ENCODE measurements at regions of chr11 and their contacts with region 1.

Region 1: GRCh38 chr11:60615497-60615896 is 83.9 kb upstream of the MS4A8 start:
- DNase-seq: no peak
- H3K4me3 ChIP-seq: no peak overlapping the region
- H3K27ac ChIP-seq: no peak overlapping the region
- H3K4me1 ChIP-seq: no peaks in the 10 kb centered on the region
- H3K27me3 ChIP-seq: peaks cover 15% of the 10 kb centered on the region; the same call in 1 of the 2 replicates
- CTCF ChIP-seq: no peak

Region 2: DNA sequence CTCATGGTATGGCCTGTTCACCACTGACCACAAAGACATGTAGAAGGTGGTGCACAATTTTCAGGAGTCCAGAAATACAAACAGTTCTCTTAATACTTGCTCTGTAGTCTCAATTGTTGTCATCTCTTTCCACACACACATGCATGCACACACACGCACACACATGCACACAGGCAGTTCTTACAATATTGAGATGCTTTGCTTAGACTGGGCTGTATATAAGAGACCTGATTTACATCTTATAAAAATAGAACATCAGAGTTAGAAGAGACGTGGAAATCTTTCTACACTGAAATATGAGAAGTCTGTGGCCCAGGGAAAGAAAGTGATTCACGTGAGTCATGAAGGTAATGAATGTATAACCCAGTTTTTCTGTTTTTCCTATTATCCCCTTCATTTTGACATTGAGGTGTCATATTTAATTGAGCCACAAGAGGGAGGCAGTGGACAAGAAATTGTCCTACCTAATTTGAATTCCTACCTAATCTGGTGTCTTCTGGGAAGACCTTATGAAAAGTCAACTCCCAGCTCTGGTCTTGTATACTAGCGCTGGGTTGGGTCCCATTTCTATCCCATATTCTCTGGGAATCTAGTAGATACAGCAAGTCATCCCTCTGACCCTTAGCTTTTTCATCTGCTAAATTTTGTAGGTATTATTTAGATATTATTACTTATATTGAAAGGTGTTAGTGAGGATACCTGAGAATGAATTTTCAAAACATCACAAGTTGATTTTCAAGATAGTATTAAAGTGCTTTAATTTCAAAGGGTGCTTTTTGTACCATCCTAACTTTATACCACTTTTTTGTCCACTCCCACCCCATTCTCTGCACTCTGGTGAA is 349.9 kb before region 1 on chr11:
- CTCF ChIA-PET with region 1: no interaction called
- POLR2A ChIA-PET with region 1: no interaction called
- intact Hi-C with region 1: loop called (anchors 5 kb)
- DNase-seq: peak in 1 of 2 experiments; percentile 22
- H3K4me3 ChIP-seq: no peak overlapping the region
- H3K27ac ChIP-seq: no peak overlapping the region
- H3K4me1 ChIP-seq: no peaks in the 10 kb centered on the region
- H3K27me3 ChIP-seq: peaks cover 23% of the 10 kb centered on the region; the same call in 1 of the 2 replicates
- CTCF ChIP-seq: peak; percentile 91

Region 3: GRCh38 chr11:60363542-60364510 is 251.7 kb before region 1 on chr11:
- CTCF ChIA-PET with region 1: no interaction called
- POLR2A ChIA-PET with region 1: no interaction called
- intact Hi-C with region 1: loop called (anchors 2 kb)
- DNase-seq: peak in 1 of 2 experiments; percentile 39
- H3K4me3 ChIP-seq: no peak overlapping the region
- H3K27ac ChIP-seq: no peak overlapping the region
- H3K4me1 ChIP-seq: no peaks in the 10 kb centered on the region
- H3K27me3 ChIP-seq: peaks cover 45% of the 10 kb centered on the region
- CTCF ChIP-seq: peak; percentile 82

Region 4: GRCh38 chr11:60647087-60647486 is 31.6 kb after region 1 on chr11:
- CTCF ChIA-PET with region 1: no interaction called
- POLR2A ChIA-PET with region 1: no interaction called
- intact Hi-C with region 1: no loop called
- DNase-seq: no peak
- H3K4me3 ChIP-seq: no peak overlapping the region
- H3K27ac ChIP-seq: no peak overlapping the region
- H3K4me1 ChIP-seq: no peaks in the 10 kb centered on the region
- H3K27me3 ChIP-seq: no peaks in the 10 kb centered on the region
- CTCF ChIP-seq: no peak

Region 5: GRCh38 chr11:60672255-60672654 is 56.8 kb after region 1 on chr11:
- CTCF ChIA-PET with region 1: no interaction called
- POLR2A ChIA-PET with region 1: no interaction called
- intact Hi-C with region 1: no loop called
- DNase-seq: no peak
- H3K4me3 ChIP-seq: no peak overlapping the region
- H3K27ac ChIP-seq: no peak overlapping the region
- H3K4me1 ChIP-seq: no peaks in the 10 kb centered on the region
- H3K27me3 ChIP-seq: peaks cover 4% of the 10 kb centered on the region; the same call in 1 of the 2 replicates
- CTCF ChIP-seq: no peak